ENCODE measurements at regions of chr15 and their contacts with region 1.

Region 1: GRCh38 chr15:85475317-85475701 is 94.9 kb downstream of the AKAP13 start:
- DNase-seq: peak; percentile 85
- ATAC-seq: peak; percentile 89
- H3K4me3 ChIP-seq: peak overlapping the region; percentile 39; the same call in 1 of the 2 replicates
- H3K27ac ChIP-seq: peak overlapping the region; percentile 90
- H3K4me1 ChIP-seq: peaks cover 42% of the 10 kb centered on the region
- H3K27me3 ChIP-seq: no peaks in the 10 kb centered on the region
- CTCF ChIP-seq: no peak
- EP300 ChIP-seq: peak; percentile 26 to 44; a peak in 1 of 4 replicates
- POLR2A ChIP-seq: no peak
- RAD21 ChIP-seq: 0 out of 2 replicates have a peak, but pooled peaks have one; percentile 8

Region 2: DNA sequence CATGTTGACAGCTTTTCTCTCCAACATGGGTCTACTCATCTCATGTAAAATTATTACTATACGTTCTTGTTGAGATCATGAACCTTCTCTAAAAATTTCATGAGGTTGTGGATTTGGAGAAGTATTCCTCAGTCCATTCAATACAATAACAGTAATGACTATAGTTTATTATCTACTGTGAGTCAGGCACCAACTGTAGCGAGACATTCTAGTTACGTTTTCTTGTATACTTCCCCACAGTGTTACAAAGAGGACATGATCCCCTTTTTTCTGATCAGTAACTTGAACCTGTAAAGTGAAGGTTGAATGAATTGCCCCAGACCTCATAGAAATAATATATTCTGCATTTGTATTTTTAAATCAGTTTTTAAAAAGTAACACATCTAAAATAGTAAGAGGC is 18.5 kb before region 1 on chr15:
- CTCF ChIA-PET with region 1: interaction called, 3 read pairs
- POLR2A ChIA-PET with region 1: interaction called, 5 read pairs
- RAD21 ChIA-PET with region 1: interaction called, 15 read pairs
- SMC1A ChIA-PET with region 1: interaction called, 14 read pairs
- in situ Hi-C with region 1: no loop called
- intact Hi-C with region 1: no loop called
- DNase-seq: no peak
- ATAC-seq: peak; percentile 73
- H3K4me3 ChIP-seq: 0 out of 2 replicates have a peak overlapping the region, but pooled peaks have one; percentile 35
- H3K27ac ChIP-seq: peak overlapping the region; percentile 77
- H3K4me1 ChIP-seq: peaks cover 47% of the 10 kb centered on the region
- H3K27me3 ChIP-seq: no peaks in the 10 kb centered on the region
- CTCF ChIP-seq: no peak
- EP300 ChIP-seq: no peak; a peak in 1 of 4 replicates
- POLR2A ChIP-seq: no peak
- RAD21 ChIP-seq: no peak

Region 3: DNA sequence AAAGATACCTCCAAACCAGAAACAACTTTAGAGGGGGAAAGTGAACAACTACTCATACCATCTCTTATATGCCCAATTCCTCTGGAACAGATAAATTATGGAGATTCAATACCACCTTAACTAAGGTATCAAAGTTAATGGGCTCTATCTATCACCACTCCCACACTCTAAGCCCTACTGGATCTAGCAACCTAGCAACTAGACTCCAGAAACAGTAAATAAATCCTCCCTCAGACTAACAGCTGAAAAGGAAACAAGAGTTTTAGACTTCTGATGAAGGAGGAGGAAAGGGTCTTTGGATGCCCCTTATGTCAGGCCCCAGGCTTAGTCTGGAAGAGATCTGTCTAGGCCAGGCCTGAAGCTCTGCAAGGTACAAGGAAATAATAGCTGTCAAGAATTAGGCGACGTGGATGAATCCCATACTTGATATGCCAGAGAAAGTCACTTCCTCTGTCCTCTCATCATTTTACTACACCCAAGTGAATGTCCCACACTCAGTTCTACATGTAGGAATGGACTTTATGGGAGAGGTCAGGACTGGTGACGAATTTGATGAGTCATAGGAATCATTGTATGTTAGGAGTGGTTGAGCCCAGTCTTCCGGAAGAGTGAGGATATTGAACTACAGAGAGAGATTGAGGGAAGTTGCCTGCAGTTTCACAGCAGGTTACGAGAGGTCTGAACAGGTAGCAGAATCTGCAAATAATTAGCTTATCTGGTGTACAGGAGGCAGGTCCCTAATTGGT is 18.9 kb after region 1 on chr15:
- CTCF ChIA-PET with region 1: interaction called, 44 read pairs
- POLR2A ChIA-PET with region 1: interaction called, 4 read pairs
- RAD21 ChIA-PET with region 1: interaction called, 27 read pairs
- SMC1A ChIA-PET with region 1: interaction called, 33 read pairs
- in situ Hi-C with region 1: no loop called
- intact Hi-C with region 1: no loop called
- DNase-seq: no peak
- ATAC-seq: no peak
- H3K4me3 ChIP-seq: no peak overlapping the region
- H3K27ac ChIP-seq: no peak overlapping the region
- H3K4me1 ChIP-seq: peaks cover 15% of the 10 kb centered on the region
- H3K27me3 ChIP-seq: no peaks in the 10 kb centered on the region
- CTCF ChIP-seq: no peak
- EP300 ChIP-seq: no peak
- POLR2A ChIP-seq: no peak
- RAD21 ChIP-seq: no peak

Region 4: DNA sequence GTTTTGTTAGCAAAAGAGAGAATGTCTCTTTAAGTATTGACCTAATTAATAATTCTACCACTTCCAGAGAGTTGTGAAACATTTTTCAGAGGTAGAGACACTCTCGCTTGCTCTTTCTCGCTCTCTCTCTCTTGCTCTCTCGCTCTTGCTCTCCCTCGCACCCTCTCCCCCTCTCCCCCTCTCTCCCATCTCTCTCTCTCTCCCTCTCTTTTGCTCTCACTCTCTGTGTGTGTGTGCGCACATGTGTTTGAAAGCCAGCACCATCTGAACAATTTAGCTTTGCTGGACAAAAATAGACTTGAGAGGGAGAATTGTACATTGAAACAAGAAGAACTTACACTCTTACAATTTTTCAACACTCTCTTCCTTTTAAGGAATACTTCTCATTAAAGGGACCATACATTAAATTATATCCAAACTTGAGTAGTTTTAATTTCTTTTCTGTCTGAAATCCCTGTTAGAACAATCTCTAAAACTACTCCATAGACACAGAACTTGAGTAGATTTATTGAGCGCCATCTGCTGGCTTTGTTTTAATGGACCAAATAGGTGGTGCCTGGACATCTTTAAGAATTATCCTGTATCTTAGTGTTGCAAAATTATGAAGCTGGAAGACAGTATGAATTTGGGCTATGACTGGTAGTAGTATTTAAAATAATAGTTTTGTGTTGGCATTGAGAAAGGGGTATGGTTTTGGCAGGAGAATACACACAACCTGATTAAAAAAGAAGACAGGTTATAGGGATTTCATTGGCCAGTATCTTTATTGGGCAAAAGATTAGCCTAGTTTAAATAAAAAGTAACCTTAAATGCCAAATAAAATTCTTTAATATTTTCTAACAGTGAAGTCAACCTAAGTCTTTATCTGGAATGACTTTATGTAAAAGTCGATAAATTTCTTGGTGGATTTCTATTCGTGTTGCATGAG is 29.7 kb after region 1 on chr15:
- CTCF ChIA-PET with region 1: interaction called, 7 read pairs
- POLR2A ChIA-PET with region 1: no interaction called
- RAD21 ChIA-PET with region 1: interaction called, 6 read pairs
- SMC1A ChIA-PET with region 1: interaction called, 10 read pairs
- in situ Hi-C with region 1: no loop called
- intact Hi-C with region 1: loop called (anchors 2 kb)
- DNase-seq: no peak
- ATAC-seq: peak; percentile 86
- H3K4me3 ChIP-seq: no peak overlapping the region
- H3K27ac ChIP-seq: no peak overlapping the region
- H3K4me1 ChIP-seq: peaks cover 18% of the 10 kb centered on the region
- H3K27me3 ChIP-seq: no peaks in the 10 kb centered on the region
- CTCF ChIP-seq: peak; percentile 38 to 59 (median 55); a peak in 5 of 6 replicates
- EP300 ChIP-seq: no peak
- POLR2A ChIP-seq: no peak
- RAD21 ChIP-seq: peak; percentile 63

Region 5: GRCh38 chr15:85515212-85515611 is 39.9 kb after region 1 on chr15:
- CTCF ChIA-PET with region 1: no interaction called
- POLR2A ChIA-PET with region 1: no interaction called
- RAD21 ChIA-PET with region 1: no interaction called
- SMC1A ChIA-PET with region 1: no interaction called
- in situ Hi-C with region 1: no loop called
- intact Hi-C with region 1: no loop called
- DNase-seq: no peak
- ATAC-seq: no peak
- H3K4me3 ChIP-seq: no peak overlapping the region
- H3K27ac ChIP-seq: no peak overlapping the region
- H3K4me1 ChIP-seq: no peaks in the 10 kb centered on the region
- H3K27me3 ChIP-seq: no peaks in the 10 kb centered on the region
- CTCF ChIP-seq: no peak
- EP300 ChIP-seq: no peak
- POLR2A ChIP-seq: no peak
- RAD21 ChIP-seq: no peak

Region 6: DNA sequence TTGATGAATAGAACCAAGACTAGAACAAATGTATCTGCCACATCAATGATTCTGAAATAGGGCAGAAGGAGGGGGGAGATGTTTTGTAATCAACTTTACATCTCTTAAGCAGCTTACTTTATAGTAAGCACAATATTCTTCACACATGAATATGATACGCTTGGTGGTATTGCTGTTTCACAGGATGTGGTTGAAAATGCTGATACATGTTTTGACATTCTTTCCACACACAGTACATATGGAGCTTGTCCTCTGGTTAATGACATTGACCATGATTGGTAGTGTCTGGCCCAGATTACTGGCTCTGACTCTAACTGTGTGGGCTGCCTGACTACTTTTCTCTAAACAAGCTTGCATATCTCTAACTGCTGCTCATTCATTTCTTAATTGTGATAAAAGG is 150.5 kb after region 1 on chr15:
- CTCF ChIA-PET with region 1: no interaction called
- POLR2A ChIA-PET with region 1: no interaction called
- RAD21 ChIA-PET with region 1: no interaction called
- SMC1A ChIA-PET with region 1: no interaction called
- in situ Hi-C with region 1: no loop called
- intact Hi-C with region 1: no loop called
- DNase-seq: no peak
- ATAC-seq: peak; percentile 92
- H3K4me3 ChIP-seq: no peak overlapping the region
- H3K27ac ChIP-seq: peak overlapping the region; percentile 50; the same call in 1 of the 2 replicates
- H3K4me1 ChIP-seq: peaks cover 27% of the 10 kb centered on the region
- H3K27me3 ChIP-seq: no peaks in the 10 kb centered on the region
- CTCF ChIP-seq: no peak
- EP300 ChIP-seq: no peak
- POLR2A ChIP-seq: no peak
- RAD21 ChIP-seq: no peak